Dendritic cell treated with granulocyte-macrophage colony-stimulating factor and Interleukin-4, amounts not matched to agents 40 ng/mL and 50 ng/mL, for 4 days (primary cell): ENCODE measurements at regions of chr11 and their contacts with region 1.

Region 1: DNA sequence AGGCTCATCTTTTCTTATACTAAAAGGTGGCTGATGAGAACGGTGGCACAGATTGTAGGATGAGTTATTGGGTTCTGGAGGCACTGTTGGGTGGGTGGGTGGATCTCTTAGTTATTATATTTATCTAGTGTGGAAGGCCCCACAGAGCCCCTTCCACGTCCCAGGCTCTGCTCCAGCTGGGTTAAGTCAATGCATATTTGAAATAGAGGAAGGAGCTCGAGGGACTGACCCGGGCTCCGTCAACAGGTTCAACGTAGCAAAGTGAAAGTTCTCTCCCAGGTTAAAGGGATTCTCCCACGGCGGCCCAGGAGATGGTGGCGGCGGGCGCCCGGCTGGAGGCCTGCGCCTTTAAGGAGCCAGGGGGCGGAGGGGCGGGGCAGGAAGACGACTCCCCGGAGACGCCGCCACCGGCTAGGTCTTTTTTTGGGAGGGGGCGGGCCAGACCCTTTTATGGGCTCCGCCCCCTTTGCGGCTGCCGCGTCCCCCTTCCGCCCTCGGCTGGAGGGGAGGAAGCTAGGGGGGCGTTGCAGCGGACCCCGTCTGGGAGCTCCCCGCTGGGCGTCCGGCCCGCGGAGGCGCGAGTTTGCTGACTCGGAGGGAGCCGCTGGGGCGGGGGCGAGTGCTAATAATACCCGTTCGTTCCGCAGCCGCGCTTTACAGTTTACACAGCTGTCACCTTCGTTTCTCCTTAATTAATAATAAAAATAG is 1.5 kb upstream of the INPPL1 start:
- H3K4me3 Mint-ChIP-seq: peak overlapping the region; percentile 99
- H3K27ac Mint-ChIP-seq: peak overlapping the region; percentile 99
- H3K4me1 Mint-ChIP-seq: peaks cover 71% of the 10 kb centered on the region
- H3K27me3 Mint-ChIP-seq: no peaks in the 10 kb centered on the region

Region 2: GRCh38 chr11:72102946-72103753 is 119.9 kb before region 1 on chr11 and contains the start of gene LAMTOR1:
- intact Hi-C with region 1: loop called (anchors 5 kb)
- H3K4me3 Mint-ChIP-seq: peak within 1 kb of the TSS; percentile 96
- H3K27ac Mint-ChIP-seq: peak within 1 kb of the TSS; percentile 92
- H3K4me1 Mint-ChIP-seq: peaks cover 54% of the 10 kb centered on the region
- H3K27me3 Mint-ChIP-seq: no peaks in the 10 kb centered on the region

Region 3: GRCh38 chr11:72112321-72113219 is 110.5 kb before region 1 on chr11 and contains the start of gene ANAPC15:
- intact Hi-C with region 1: loop called (anchors 1 kb)
- H3K4me3 Mint-ChIP-seq: peak within 1 kb of the TSS; percentile 93
- H3K27ac Mint-ChIP-seq: peak within 1 kb of the TSS; percentile 100
- H3K4me1 Mint-ChIP-seq: peaks cover 39% of the 10 kb centered on the region
- H3K27me3 Mint-ChIP-seq: no peaks in the 10 kb centered on the region

Region 4: GRCh38 chr11:72132646-72133045 is 90.4 kb before region 1 on chr11:
- intact Hi-C with region 1: no loop called
- H3K4me3 Mint-ChIP-seq: no peak overlapping the region
- H3K27ac Mint-ChIP-seq: peak overlapping the region; percentile 83
- H3K4me1 Mint-ChIP-seq: peaks cover 54% of the 10 kb centered on the region
- H3K27me3 Mint-ChIP-seq: no peaks in the 10 kb centered on the region